ENCODE measurements at regions of chr2 and their contacts with region 1.

Region 1: DNA sequence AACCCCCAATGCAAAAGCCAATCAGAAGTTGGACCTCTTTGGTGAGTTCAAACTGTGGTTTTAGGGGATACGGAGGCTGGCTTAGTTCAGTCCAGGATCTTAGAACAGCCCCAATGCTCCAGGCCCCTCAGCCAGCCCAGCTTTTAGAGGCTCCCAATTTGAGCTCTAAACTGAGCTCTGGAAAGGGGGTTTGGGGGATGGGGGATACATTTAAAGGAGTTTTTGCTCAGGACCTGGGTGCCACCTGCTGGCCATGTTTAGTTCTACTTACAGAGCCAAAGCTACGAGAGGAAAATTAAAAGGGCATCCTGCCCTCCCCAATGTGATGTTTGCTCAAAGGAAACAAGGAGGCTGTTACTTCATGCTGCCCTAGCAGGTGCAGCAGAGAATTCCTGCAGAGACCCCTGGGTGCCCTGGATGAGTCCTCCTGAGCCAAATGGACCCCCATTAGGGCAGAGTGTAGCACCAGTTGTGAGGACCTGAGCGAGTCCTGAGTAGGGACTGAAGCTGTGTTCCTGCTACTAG is 15.9 kb upstream of the TMEM214 start:
- DNase-seq: peak in 13 of 14 experiments; percentile 15 to 69 (median 29)
- ATAC-seq: no peak
- H3K4me3 ChIP-seq: no peak overlapping the region
- H3K4me3 Mint-ChIP-seq: no peak overlapping the region
- H3K27ac ChIP-seq: no peak overlapping the region
- H3K27ac Mint-ChIP-seq: no peak overlapping the region
- H3K4me1 ChIP-seq: no peaks in the 10 kb centered on the region
- H3K4me1 Mint-ChIP-seq: no peaks in the 10 kb centered on the region
- H3K27me3 ChIP-seq: no peaks in the 10 kb centered on the region
- H3K27me3 Mint-ChIP-seq: no peaks in the 10 kb centered on the region
- CTCF ChIP-seq: peak; percentile 66

Region 2: DNA sequence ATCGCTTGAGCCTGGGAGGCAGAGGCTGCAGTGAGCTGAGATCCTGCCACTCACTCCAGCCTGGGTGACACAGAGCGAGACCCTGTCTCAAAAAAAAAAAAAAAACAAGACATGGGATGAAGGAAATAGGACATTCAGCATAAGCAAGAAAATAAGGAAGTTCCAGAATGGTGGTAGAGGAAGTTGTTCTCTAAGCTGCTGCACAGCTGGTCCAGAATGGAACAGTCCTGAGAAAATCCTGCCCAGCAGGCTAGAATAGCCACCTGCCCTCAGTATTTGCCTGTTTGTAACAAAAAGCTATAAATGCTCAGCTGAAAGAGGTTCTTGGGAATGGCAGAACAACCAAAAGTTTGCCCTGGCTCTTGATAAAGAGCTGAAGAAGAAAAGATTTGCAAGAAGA is 57.5 kb before region 1 on chr2:
- CTCF ChIA-PET with region 1: interaction called, 56 read pairs
- POLR2A ChIA-PET with region 1: interaction called, 3 read pairs
- intact Hi-C with region 1: loop called (anchors 1 kb)
- DNase-seq: no peak
- ATAC-seq: no peak
- H3K4me3 ChIP-seq: no peak overlapping the region
- H3K4me3 Mint-ChIP-seq: no peak overlapping the region
- H3K27ac ChIP-seq: no peak overlapping the region
- H3K27ac Mint-ChIP-seq: no peak overlapping the region
- H3K4me1 ChIP-seq: peaks cover 5% of the 10 kb centered on the region
- H3K4me1 Mint-ChIP-seq: no peaks in the 10 kb centered on the region
- H3K27me3 ChIP-seq: peaks cover 7 to 10% of the 10 kb centered on the region in 2 experiments
- H3K27me3 Mint-ChIP-seq: peaks cover 54% of the 10 kb centered on the region
- CTCF ChIP-seq: no peak

Region 3: DNA sequence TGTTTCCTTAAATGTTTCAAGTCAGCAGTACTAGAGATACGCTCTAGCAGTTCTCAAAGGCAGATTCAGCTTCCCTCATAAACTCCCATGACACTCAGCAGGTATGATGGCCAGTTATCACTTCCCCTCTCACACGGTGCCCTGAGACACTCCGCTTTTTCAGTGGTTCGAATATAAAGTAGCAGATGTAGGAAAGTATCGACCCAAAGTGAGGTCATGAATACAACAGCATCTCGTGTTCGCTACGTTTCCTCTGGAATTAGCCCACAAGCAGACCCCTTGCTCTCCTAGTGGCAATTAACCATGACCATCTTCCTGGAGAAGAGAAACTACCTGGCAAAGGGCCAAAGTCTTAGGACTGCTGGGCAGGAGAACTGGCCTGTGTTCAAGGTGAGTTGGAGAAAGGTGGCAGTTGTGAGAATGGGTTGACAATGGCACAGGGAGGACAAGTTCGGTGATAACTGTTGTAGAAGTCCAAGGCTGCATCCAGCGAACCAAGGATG is 25.3 kb after region 1 on chr2:
- CTCF ChIA-PET with region 1: no interaction called
- POLR2A ChIA-PET with region 1: no interaction called
- intact Hi-C with region 1: no loop called
- DNase-seq: no peak
- ATAC-seq: no peak
- H3K4me3 ChIP-seq: no peak overlapping the region
- H3K4me3 Mint-ChIP-seq: no peak overlapping the region
- H3K27ac ChIP-seq: no peak overlapping the region
- H3K27ac Mint-ChIP-seq: peak overlapping the region; percentile 34
- H3K4me1 ChIP-seq: no peaks in the 10 kb centered on the region
- H3K4me1 Mint-ChIP-seq: peaks cover 5% of the 10 kb centered on the region
- H3K27me3 ChIP-seq: no peaks in the 10 kb centered on the region
- H3K27me3 Mint-ChIP-seq: no peaks in the 10 kb centered on the region
- CTCF ChIP-seq: no peak